ENCODE measurements at regions of chr3 and their contacts with region 1.

Region 1: DNA sequence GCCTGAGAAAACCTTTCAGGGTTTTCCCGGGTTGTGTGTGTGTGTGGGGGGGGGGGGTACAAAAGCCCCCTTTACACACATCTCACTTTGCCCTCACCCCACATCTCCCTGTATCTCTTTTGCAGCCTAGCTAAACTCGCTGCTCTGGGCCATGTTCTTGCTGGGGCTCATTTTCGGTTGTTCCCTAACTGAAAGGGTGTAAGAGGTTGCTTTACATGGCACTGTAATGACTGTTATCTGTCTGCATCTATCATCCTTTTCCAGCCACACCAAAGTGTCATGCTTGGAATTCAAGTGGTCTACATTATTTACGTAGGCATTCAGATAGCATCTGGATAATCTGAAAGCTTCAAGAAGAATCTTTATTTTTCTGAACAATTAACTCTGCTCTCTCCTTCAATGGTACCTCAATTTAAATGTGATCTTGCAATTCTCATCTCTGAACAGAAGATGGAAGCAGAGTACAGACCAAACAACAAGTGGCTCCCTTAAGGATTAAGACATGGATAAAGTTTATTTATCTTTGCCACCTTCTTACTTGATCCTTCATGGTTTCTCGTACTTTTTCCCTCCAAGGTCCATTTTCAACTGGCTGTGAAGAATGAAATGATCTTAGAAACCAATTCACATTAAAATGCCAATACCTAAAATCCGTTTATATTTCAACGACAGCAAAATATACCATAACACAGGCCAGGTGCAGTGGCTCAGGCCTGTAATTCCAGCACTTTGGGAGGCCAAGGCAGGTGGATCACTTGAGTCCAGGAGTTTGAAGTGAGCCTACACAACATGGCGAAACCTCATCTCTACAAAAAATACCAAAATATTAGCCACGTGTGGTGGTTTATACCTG is 34.9 kb downstream of the DCLK3 start:
- DNase-seq: no peak
- ATAC-seq: peak; percentile 82
- H3K4me3 ChIP-seq: no peak overlapping the region
- H3K27ac ChIP-seq: no peak overlapping the region
- H3K4me1 ChIP-seq: peaks cover 4% of the 10 kb centered on the region
- H3K27me3 ChIP-seq: no peaks in the 10 kb centered on the region
- CTCF ChIP-seq: peak; percentile 80

Region 2: GRCh38 chr3:36852071-36852470 is 122.6 kb after region 1 on chr3:
- intact Hi-C with region 1: loop called (anchors 10 kb)
- DNase-seq: no peak
- ATAC-seq: no peak
- H3K4me3 ChIP-seq: no peak overlapping the region
- H3K27ac ChIP-seq: no peak overlapping the region
- H3K4me1 ChIP-seq: no peaks in the 10 kb centered on the region
- H3K27me3 ChIP-seq: no peaks in the 10 kb centered on the region
- CTCF ChIP-seq: no peak

Region 3: GRCh38 chr3:36957862-36958686 is 228.6 kb after region 1 on chr3:
- intact Hi-C with region 1: loop called (anchors 10 kb)
- DNase-seq: no peak
- ATAC-seq: no peak
- H3K4me3 ChIP-seq: no peak overlapping the region
- H3K27ac ChIP-seq: peak overlapping the region; percentile 7
- H3K4me1 ChIP-seq: no peaks in the 10 kb centered on the region
- H3K27me3 ChIP-seq: no peaks in the 10 kb centered on the region
- CTCF ChIP-seq: no peak

Measured in upper lobe of right lung (tissue), 1 donor.